ENCODE measurements at regions of chr11 and their contacts with region 1.

Region 1: DNA sequence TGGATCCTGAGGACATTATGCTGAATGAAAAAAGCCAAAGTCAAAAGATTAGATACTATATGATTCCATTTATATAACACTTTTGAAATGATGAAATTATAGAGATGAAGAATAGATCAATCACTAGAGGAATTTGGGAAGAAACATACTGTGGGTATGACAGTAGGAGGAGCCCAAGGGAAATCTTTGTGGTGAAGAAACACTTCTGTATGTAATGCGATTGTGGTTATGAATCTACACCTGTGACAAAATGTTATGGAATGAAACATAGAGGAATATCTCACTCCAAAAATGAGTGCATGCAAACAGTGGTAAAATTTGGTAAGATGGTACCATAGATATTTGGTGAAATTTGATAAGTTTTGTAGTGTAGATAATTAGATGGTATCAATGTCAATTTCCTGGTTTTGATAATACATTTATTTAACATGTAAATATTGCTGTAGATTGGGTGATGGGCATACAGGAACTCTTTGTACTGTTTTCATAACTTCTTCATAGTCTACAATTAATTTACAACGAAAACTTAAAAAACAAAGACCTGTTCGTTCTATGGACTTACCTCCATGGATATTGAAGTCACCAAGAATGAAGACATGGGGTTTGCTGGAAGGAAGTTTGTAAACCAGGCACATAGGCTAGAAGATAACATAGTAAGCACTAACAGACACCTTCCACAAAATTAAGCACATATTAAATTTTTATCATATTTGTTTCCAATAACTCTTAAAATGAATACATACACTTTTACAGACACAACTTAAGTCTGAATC is 11.5 kb downstream of the MRGPRX1 start:
- DNase-seq: peak; percentile 50
- ATAC-seq: peak; percentile 55
- H3K4me3 ChIP-seq: no peak overlapping the region
- H3K27ac ChIP-seq: no peak overlapping the region
- H3K4me1 ChIP-seq: no peaks in the 10 kb centered on the region
- H3K27me3 ChIP-seq: peaks cover 39% of the 10 kb centered on the region; the same call in 1 of the 2 replicates
- CTCF ChIP-seq: peak; percentile 42; the same call in 1 of the 2 replicates

Region 2: GRCh38 chr11:19055016-19055415 is 127.3 kb after region 1 on chr11:
- CTCF ChIA-PET with region 1: no interaction called
- POLR2A ChIA-PET with region 1: no interaction called
- intact Hi-C with region 1: loop called (anchors 10 kb)
- DNase-seq: peak; percentile 44
- ATAC-seq: no peak
- H3K4me3 ChIP-seq: no peak overlapping the region
- H3K27ac ChIP-seq: no peak overlapping the region
- H3K4me1 ChIP-seq: no peaks in the 10 kb centered on the region; the same call in 1 of the 2 replicates
- H3K27me3 ChIP-seq: no peaks in the 10 kb centered on the region
- CTCF ChIP-seq: no peak

Measured in PC-3 (cell line).